ENCODE measurements at regions of chr2 and their contacts with region 1.

Region 1: GRCh38 chr2:23606968-23607367 is 222.0 kb downstream of the KLHL29 start:
- DNase-seq: no peak
- H3K4me3 ChIP-seq: no peak overlapping the region
- H3K27ac ChIP-seq: no peak overlapping the region
- H3K4me1 ChIP-seq: peaks cover 2 to 13% (median 6%) of the 10 kb centered on the region in 4 experiments; a peak in 6 of 7 replicates
- H3K27me3 ChIP-seq: no peaks in the 10 kb centered on the region
- CTCF ChIP-seq: no peak
- EP300 ChIP-seq: no peak
- POLR2A ChIP-seq: no peak
- RAD21 ChIP-seq: no peak

Region 2: DNA sequence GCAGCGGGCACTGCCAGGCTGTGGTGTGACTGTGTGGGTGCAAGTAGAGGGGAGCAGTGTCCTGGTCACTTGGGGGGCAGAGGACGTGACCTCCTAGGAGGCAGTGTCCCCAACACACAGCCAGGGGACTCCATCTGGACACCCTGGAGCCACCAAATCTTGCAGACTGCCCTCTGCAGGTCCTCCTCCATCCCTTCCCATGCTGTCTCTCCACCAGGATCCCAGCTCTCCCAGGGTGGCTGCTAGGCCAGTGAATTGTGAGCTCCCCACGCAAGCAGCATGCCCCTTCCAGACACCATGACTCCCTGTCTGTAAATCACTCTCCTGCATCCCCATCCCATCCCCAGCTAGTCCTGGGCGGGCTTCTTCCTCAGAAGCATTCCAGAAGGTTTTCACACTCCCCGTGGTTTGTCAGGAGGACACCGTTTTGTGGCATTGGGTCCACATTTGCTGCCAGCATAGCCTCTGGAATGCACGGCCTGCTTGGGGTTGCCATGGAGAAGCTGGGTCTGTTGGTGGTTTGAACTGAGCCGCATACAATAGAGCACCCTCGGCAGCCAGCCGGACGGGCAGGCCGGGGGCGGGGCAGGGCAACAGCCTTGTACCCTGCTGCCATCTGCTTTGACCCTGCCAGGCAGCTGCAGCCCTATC is 11.2 kb before region 1 on chr2:
- CTCF ChIA-PET with region 1: interaction called, 14 read pairs
- POLR2A ChIA-PET with region 1: interaction called, 3 read pairs
- DNase-seq: no peak
- H3K4me3 ChIP-seq: no peak overlapping the region
- H3K27ac ChIP-seq: no peak overlapping the region
- H3K4me1 ChIP-seq: peaks cover 0 to 4% (median under 1%) of the 10 kb centered on the region in 4 experiments; a peak in 3 of 7 replicates
- H3K27me3 ChIP-seq: no peaks in the 10 kb centered on the region
- CTCF ChIP-seq: peak in 1 of 3 experiments; percentile 22; a peak in 1 of 4 replicates
- EP300 ChIP-seq: no peak
- POLR2A ChIP-seq: no peak
- RAD21 ChIP-seq: no peak

Measured in H1 (cell line).